Activated naive CD4-positive, alpha-beta T cell treated with anti-CD3 and anti-CD28 coated beads for 36 hours (primary cell): ENCODE measurements at regions of chr13 and their contacts with region 1.

Region 1: GRCh38 chr13:102460801-102461200 is 59.0 kb upstream of the FGF14 start:
- DNase-seq: no peak
- H3K4me3 Mint-ChIP-seq: no peak overlapping the region
- H3K27ac Mint-ChIP-seq: no peak overlapping the region
- H3K4me1 Mint-ChIP-seq: peaks cover 6% of the 10 kb centered on the region
- H3K27me3 Mint-ChIP-seq: peaks cover 9% of the 10 kb centered on the region

Region 2: DNA sequence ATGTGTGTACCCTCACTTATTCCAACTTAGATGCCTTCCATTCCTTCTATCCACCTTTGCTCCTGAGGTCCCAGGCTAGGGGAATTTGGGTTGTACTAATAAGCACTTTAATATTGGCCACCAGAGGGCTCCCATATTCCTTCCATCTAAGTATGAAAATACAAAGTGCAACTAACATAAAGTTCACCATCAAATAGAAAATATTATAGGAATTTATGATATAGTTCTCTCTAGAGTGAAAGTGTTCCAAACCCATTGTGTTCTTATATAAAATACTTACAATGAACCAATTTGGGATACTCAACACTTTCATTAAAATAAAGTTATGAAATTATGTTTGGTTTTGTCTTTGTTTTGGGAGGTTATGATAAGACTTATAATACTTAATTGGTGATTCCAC is 946.0 kb before region 1 on chr13:
- CTCF ChIA-PET with region 1: no interaction called
- intact Hi-C with region 1: loop called (anchors 5 kb)
- DNase-seq: peak; percentile 29
- H3K4me3 Mint-ChIP-seq: no peak overlapping the region
- H3K27ac Mint-ChIP-seq: no peak overlapping the region
- H3K4me1 Mint-ChIP-seq: peaks cover 2% of the 10 kb centered on the region
- H3K27me3 Mint-ChIP-seq: peaks cover 4% of the 10 kb centered on the region

Region 3: GRCh38 chr13:102089177-102089576 is 371.6 kb before region 1 on chr13:
- CTCF ChIA-PET with region 1: no interaction called
- intact Hi-C with region 1: loop called (anchors 2 kb)
- DNase-seq: no peak
- H3K4me3 Mint-ChIP-seq: no peak overlapping the region
- H3K27ac Mint-ChIP-seq: no peak overlapping the region
- H3K4me1 Mint-ChIP-seq: no peaks in the 10 kb centered on the region
- H3K27me3 Mint-ChIP-seq: peaks cover 3% of the 10 kb centered on the region

Region 4: GRCh38 chr13:102197193-102197592 is 263.6 kb before region 1 on chr13:
- CTCF ChIA-PET with region 1: no interaction called
- intact Hi-C with region 1: loop called (anchors 1 kb)
- DNase-seq: no peak
- H3K4me3 Mint-ChIP-seq: no peak overlapping the region
- H3K27ac Mint-ChIP-seq: no peak overlapping the region
- H3K4me1 Mint-ChIP-seq: no peaks in the 10 kb centered on the region
- H3K27me3 Mint-ChIP-seq: peaks cover under 1% of the 10 kb centered on the region

Region 5: GRCh38 chr13:102386461-102386860 is 74.3 kb before region 1 on chr13:
- CTCF ChIA-PET with region 1: no interaction called
- intact Hi-C with region 1: no loop called
- DNase-seq: no peak
- H3K4me3 Mint-ChIP-seq: no peak overlapping the region
- H3K27ac Mint-ChIP-seq: no peak overlapping the region
- H3K4me1 Mint-ChIP-seq: no peaks in the 10 kb centered on the region
- H3K27me3 Mint-ChIP-seq: peaks cover 18% of the 10 kb centered on the region

Region 6: DNA sequence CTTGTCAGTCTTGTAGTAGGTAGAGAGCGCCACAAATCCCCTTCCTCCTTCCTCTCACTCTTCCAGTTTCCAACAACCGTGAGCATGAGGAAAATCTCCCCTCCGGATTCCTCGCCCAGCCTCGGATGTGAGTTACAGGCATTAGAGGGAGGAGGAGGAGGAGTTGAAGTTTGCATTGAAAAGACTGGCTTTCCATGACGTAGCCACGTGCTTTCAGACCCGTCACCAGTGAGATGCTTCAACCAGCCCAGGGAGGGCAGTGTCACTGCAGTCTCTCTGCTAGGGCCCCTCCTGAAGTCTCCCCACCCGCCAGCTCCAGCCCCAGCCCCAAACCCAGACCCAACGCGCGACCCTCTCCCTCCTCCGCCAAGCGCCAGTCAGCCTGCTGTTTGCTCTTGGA is 58.5 kb before region 1 on chr13:
- CTCF ChIA-PET with region 1: interaction called, 3 read pairs
- intact Hi-C with region 1: loop called (anchors 1 kb)
- DNase-seq: peak; percentile 68
- H3K4me3 Mint-ChIP-seq: peak overlapping the region; percentile 62
- H3K27ac Mint-ChIP-seq: no peak overlapping the region
- H3K4me1 Mint-ChIP-seq: peaks cover 24% of the 10 kb centered on the region
- H3K27me3 Mint-ChIP-seq: peaks cover 47% of the 10 kb centered on the region

Region 7: DNA sequence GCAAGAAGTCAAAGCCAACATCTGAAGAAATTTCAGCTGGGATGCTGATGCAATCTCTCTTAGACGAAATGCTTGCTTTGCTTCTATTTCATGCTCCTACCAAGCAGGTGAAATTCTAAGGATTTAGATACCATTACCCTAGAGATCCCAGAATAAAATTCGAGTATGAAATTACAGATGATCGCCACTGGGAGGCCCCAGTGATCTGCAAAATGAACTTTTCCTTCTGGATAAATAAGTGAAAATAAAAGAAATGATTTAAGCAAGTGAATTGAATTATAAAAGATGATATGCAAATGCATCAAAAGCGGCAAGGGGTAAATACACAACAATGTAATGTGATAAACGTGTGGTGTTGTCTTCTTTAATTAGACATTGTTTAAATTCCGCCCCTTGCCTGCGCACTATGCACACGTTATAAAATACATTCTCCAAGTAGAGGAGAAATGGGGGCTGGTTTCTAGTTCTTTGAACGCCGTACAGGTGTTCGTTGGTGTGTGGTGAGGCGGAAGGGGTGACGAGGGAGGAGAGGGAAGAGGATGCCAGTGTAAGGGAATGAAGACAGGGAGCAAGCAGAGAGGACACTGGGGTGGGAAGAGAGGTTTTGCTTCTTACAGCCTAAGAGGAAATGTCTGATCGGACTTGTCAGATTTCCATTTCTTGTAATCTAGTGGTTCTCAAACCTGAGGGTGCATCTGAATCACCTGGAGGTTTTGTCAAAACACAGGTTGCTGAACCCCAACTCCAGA is 443.0 kb after region 1 on chr13:
- CTCF ChIA-PET with region 1: no interaction called
- intact Hi-C with region 1: no loop called
- DNase-seq: peak; percentile 14
- H3K4me3 Mint-ChIP-seq: no peak overlapping the region
- H3K27ac Mint-ChIP-seq: no peak overlapping the region
- H3K4me1 Mint-ChIP-seq: no peaks in the 10 kb centered on the region
- H3K27me3 Mint-ChIP-seq: peaks cover 4% of the 10 kb centered on the region